ENCODE measurements at regions of chr6 and their contacts with region 1.

Region 1: GRCh38 chr6:152338335-152339125 is 298.6 kb downstream of the SYNE1 start:
- H3K4me3 Mint-ChIP-seq: no peak overlapping the region
- H3K27ac Mint-ChIP-seq: no peak overlapping the region
- H3K4me1 Mint-ChIP-seq: peaks cover 6% of the 10 kb centered on the region
- H3K27me3 Mint-ChIP-seq: peaks cover 2% of the 10 kb centered on the region

Region 2: DNA sequence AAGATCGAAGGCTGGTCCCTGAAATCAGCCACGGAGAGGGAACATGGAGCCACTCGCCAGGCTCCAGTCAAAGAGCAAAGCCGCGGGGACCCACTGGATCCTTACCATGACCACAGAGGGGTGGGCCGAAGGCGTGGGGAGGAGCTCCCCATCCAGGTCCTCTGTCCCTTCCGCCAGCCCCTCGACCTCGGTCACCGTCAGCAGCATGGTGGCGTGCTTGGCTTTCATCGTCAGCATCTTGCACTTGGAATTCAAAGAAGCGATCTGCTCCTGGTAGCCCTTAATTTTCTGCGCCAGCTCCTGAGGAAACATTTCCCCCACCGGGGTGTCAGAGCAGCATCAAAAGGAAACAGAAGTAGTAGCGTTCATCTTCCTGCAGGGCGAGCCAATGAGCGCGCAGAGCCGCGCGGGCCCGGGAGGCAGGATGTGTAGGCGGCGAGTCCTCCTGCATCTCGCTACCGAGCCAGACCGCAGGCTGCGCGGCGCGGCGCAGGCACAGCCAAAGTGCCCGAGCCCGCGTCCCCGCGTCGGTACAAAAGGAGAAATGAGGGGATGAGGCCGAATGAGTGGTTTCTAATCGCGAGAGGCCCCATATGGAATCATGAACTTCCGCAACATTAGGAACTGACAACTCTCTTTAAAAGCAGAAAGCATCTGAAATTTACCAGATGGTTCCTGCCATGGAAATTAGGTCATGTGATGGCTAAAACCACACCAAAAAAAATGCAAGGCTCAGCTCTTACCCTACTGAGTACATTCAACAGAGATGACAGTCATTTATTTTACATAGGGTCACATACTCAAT is 36.6 kb before region 1 on chr6:
- intact Hi-C with region 1: loop called (anchors 1 kb)
- H3K4me3 Mint-ChIP-seq: peak overlapping the region; percentile 100
- H3K27ac Mint-ChIP-seq: peak overlapping the region; percentile 98
- H3K4me1 Mint-ChIP-seq: peaks cover 21% of the 10 kb centered on the region
- H3K27me3 Mint-ChIP-seq: no peaks in the 10 kb centered on the region

Region 3: DNA sequence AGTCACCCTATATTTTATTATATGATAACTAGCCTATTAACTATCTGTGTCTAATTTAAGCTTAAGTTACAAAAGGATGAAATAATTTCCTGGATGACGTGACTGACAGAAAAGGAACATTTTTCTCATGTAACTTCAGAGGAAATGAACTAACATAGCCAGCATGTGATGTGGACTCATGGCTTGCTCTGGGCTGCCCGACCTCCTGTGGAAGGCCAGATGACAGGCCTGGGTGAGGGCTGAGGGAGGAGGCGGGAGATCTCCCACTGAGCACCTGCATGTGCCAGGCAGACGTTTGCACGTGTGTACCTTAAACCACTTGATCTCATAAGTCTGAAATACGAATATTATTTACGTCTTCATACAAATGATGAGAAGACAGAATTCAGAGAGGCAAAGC is 22.5 kb before region 1 on chr6:
- intact Hi-C with region 1: loop called (anchors 2 kb)
- H3K4me3 Mint-ChIP-seq: no peak overlapping the region
- H3K27ac Mint-ChIP-seq: peak overlapping the region; percentile 82
- H3K4me1 Mint-ChIP-seq: peaks cover 35% of the 10 kb centered on the region
- H3K27me3 Mint-ChIP-seq: no peaks in the 10 kb centered on the region

Region 4: DNA sequence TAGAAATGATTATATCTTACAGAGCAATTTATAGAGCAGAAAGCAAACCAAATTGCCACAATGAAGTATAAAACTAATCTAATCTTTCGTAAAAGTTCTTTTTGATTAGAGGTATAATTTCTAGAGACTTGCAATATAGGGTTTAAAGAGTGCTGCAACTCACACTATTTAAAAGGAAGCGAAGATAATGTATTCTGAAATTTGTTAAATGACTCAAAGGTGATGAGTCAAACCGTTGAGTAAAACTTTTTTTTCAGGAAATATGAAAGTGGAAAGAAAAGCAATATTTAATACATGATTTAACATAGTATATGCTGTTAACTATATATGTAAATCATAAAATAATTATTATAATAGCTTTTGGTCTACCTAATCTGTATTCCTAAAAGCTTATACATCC is 165.0 kb after region 1 on chr6:
- intact Hi-C with region 1: no loop called
- H3K4me3 Mint-ChIP-seq: no peak overlapping the region
- H3K27ac Mint-ChIP-seq: no peak overlapping the region
- H3K4me1 Mint-ChIP-seq: no peaks in the 10 kb centered on the region
- H3K27me3 Mint-ChIP-seq: no peaks in the 10 kb centered on the region

Measured in dendritic cell treated with granulocyte-macrophage colony-stimulating factor and Interleukin-4, amounts not matched to agents 40 ng/mL and 50 ng/mL, for 4 days (primary cell).